Naive thymus-derived CD8-positive, alpha-beta T cell (primary cell): ENCODE measurements at regions of chr6 and their contacts with region 1.

Region 1: GRCh38 chr6:42390228-42390934 is 61.3 kb downstream of the TRERF1 start:
- DNase-seq: peak in 8 of 10 donors; percentile 34 to 88 (median 74)
- ATAC-seq: peak; percentile 77 to 81
- H3K4me3 Mint-ChIP-seq: peak overlapping the region; percentile 64 to 91 (median 78)
- H3K27ac Mint-ChIP-seq: peak overlapping the region; percentile 95 to 100 (median 99)
- H3K4me1 Mint-ChIP-seq: peaks cover 58 to 99% (median 99%) of the 10 kb centered on the region in 4 donors
- H3K27me3 Mint-ChIP-seq: no peaks in the 10 kb centered on the region

Region 2: GRCh38 chr6:42279144-42279781 is 111.1 kb before region 1 on chr6:
- POLR2A ChIA-PET with region 1: interaction called, 26 read pairs
- DNase-seq: peak in 5 of 10 donors; percentile 16 to 43 (median 31)
- ATAC-seq: peak; percentile 11 to 12
- H3K4me3 Mint-ChIP-seq: peak overlapping the region; percentile 43 to 85 (median 66)
- H3K27ac Mint-ChIP-seq: peak overlapping the region; percentile 85 to 99 (median 94)
- H3K4me1 Mint-ChIP-seq: peaks cover 37 to 72% (median 59%) of the 10 kb centered on the region in 4 donors
- H3K27me3 Mint-ChIP-seq: no peaks in the 10 kb centered on the region

Region 3: GRCh38 chr6:42374018-42374659 is 16.2 kb before region 1 on chr6:
- POLR2A ChIA-PET with region 1: interaction called, 112 read pairs
- DNase-seq: peak in 1 of 10 donors; percentile 41
- ATAC-seq: peak; percentile 61 to 79
- H3K4me3 Mint-ChIP-seq: peak overlapping the region in 8 of 10 donors; percentile 13 to 72 (median 56)
- H3K27ac Mint-ChIP-seq: peak overlapping the region; percentile 74 to 94 (median 90)
- H3K4me1 Mint-ChIP-seq: peaks cover 39 to 83% (median 75%) of the 10 kb centered on the region in 4 donors
- H3K27me3 Mint-ChIP-seq: no peaks in the 10 kb centered on the region

Region 4: GRCh38 chr6:42417641-42418112 is 27.3 kb after region 1 on chr6:
- POLR2A ChIA-PET with region 1: interaction called, 30 read pairs
- DNase-seq: peak in 9 of 10 donors; percentile 20 to 68 (median 60)
- ATAC-seq: peak; percentile 85 to 90
- H3K4me3 Mint-ChIP-seq: peak overlapping the region; percentile 9 to 80 (median 68)
- H3K27ac Mint-ChIP-seq: peak overlapping the region in 9 of 10 donors; percentile 79 to 90 (median 85)
- H3K4me1 Mint-ChIP-seq: peaks cover 35 to 77% (median 72%) of the 10 kb centered on the region in 4 donors
- H3K27me3 Mint-ChIP-seq: no peaks in the 10 kb centered on the region

Region 5: GRCh38 chr6:42563697-42564505 is 173.5 kb after region 1 on chr6 and contains the start of gene UBR2:
- POLR2A ChIA-PET with region 1: interaction called, 14 read pairs
- DNase-seq: peak; percentile 74 to 98 (median 92)
- ATAC-seq: peak; percentile 94 to 96
- H3K4me3 Mint-ChIP-seq: peak within 1 kb of the TSS; percentile 94 to 100 (median 96)
- H3K27ac Mint-ChIP-seq: peak within 1 kb of the TSS; percentile 89 to 98 (median 96)
- H3K4me1 Mint-ChIP-seq: peaks cover 15 to 44% (median 33%) of the 10 kb centered on the region in 4 donors
- H3K27me3 Mint-ChIP-seq: no peaks in the 10 kb centered on the region
- polyA plus RNA-seq, gene UBR2: 7.0 to 9.1 (median 8.1) TPM